ENCODE measurements at regions of chr15 and their contacts with region 1.

Region 1: DNA sequence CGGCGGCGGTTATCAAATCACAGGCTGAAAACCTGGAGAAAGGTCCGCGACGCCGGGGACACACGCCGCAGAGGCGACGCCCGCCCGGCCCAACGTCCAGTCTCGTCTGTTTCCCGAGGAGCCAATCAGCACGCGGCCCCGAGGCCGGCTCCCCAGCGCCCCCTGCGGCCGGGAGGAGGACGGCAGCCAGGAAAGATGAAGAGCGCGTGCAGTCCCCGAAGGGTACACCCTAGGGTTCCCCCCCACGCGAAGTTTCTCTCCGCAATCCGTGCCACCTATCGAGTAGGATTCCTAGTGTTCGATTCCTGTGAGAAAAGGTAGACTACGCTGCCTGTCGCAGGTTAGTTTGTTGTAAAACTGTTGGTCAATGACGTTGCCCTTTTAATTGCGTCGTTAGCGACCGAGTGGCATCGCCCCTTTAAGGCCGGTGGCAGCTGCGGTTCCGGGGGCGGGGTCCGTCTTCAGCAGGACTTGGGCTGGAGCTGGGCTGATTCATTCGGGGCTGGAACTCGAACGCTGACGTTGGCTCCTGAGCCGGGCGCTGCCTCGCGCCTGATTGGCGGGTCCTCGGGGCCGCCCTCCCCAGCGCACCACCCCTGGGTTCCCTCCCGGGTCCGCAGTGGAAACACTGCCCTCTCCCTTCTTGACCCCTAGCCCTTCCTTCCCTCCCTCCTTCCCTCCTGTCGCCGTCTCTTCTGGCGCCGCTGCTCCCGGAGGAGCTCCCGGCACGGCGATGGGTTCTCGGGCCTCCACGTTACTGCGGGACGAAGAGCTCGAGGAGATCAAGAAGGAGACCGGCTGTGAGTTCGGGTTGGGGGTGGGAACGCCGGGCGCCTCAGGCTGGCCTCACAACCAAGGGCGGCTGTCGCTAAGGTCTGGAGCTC is at the starts of genes CHP1 and EXD1:
- DNase-seq: peak; percentile 87
- ATAC-seq: peak; percentile 99
- H3K4me3 ChIP-seq: peak within 1 kb of the TSS; percentile 86
- H3K27ac ChIP-seq: peak within 1 kb of the TSS; percentile 89
- H3K4me1 ChIP-seq: peaks cover 2% of the 10 kb centered on the region; the same call in 1 of the 2 replicates
- H3K27me3 ChIP-seq: no peaks in the 10 kb centered on the region
- CTCF ChIP-seq: peak; percentile 80 to 95 (median 90)
- EP300 ChIP-seq: 0 out of 4 replicates have a peak, but pooled peaks have one; percentile 5 to 9
- POLR2A ChIP-seq: peak; percentile 94
- RAD21 ChIP-seq: peak; percentile 13; the same call in 1 of the 2 replicates
- polyA plus RNA-seq, gene CHP1: 32.5 to 43.3 TPM
- polyA plus RNA-seq, gene EXD1: 0.19 TPM in 1 of 2 experiments, not detected in the other

Region 2: GRCh38 chr15:41001524-41002214 is 229.2 kb before region 1 on chr15:
- CTCF ChIA-PET with region 1: no interaction called
- POLR2A ChIA-PET with region 1: no interaction called
- RAD21 ChIA-PET with region 1: no interaction called
- SMC1A ChIA-PET with region 1: no interaction called
- in situ Hi-C with region 1: no loop called
- intact Hi-C with region 1: no loop called
- DNase-seq: no peak
- ATAC-seq: no peak
- H3K4me3 ChIP-seq: no peak overlapping the region
- H3K27ac ChIP-seq: no peak overlapping the region
- H3K4me1 ChIP-seq: no peaks in the 10 kb centered on the region
- H3K27me3 ChIP-seq: no peaks in the 10 kb centered on the region
- CTCF ChIP-seq: no peak
- EP300 ChIP-seq: no peak
- POLR2A ChIP-seq: no peak
- RAD21 ChIP-seq: no peak

Region 3: DNA sequence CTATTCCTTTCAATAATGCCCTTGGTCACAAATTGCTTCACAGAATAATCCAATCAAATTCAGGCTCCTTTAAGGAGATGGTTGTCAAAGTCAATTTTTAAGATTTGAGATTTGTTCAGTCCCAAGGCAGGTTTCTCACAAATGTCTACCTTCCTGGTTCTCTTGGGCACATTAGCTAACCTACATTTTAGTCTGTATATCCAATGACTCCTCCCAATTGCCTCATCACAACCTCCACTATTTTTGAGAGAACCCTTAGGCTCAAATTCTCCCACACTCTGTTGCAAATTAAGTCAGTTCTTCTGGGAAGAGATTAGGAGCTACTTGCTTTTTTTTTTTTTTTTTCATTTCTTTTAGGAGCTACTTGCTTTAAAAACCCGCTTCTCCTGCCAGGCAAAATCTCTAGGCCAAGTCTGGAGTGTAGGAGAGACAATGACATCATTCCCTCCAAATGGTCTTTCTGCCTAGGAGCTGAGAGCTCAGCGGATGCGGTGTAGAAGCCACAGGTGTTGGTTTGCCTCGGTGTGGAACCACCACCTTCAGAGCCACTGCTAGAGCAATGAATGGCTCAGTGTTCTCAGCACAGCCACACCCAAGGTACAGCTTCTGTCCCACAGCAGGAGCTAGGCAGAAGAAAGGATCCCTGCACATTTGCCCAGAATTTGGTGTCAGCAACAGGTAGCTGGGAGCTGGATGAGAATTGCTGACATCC is 104.8 kb before region 1 on chr15:
- CTCF ChIA-PET with region 1: no interaction called
- POLR2A ChIA-PET with region 1: no interaction called
- RAD21 ChIA-PET with region 1: no interaction called
- SMC1A ChIA-PET with region 1: no interaction called
- in situ Hi-C with region 1: no loop called
- intact Hi-C with region 1: no loop called
- DNase-seq: no peak
- ATAC-seq: no peak
- H3K4me3 ChIP-seq: no peak overlapping the region
- H3K27ac ChIP-seq: no peak overlapping the region
- H3K4me1 ChIP-seq: no peaks in the 10 kb centered on the region
- H3K27me3 ChIP-seq: no peaks in the 10 kb centered on the region
- CTCF ChIP-seq: no peak
- EP300 ChIP-seq: no peak
- POLR2A ChIP-seq: no peak
- RAD21 ChIP-seq: no peak

Region 4: DNA sequence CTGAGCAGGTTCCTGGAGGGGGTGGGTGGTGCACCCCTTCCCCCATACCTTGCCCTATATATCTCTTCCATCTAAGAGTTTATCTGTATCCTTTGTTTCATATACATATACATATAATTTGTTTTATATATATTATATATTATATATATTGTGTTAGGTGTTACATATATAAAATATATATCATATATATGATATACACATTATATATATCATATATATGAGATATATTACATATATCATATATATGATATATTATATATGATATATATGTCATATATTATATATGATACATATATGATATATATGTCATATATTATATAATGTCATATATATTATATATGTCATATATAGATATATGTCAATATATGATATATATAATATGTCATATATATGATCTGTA is 31.4 kb before region 1 on chr15:
- CTCF ChIA-PET with region 1: no interaction called
- POLR2A ChIA-PET with region 1: no interaction called
- RAD21 ChIA-PET with region 1: no interaction called
- SMC1A ChIA-PET with region 1: no interaction called
- in situ Hi-C with region 1: no loop called
- intact Hi-C with region 1: no loop called
- DNase-seq: no peak
- ATAC-seq: no peak
- H3K4me3 ChIP-seq: no peak overlapping the region
- H3K27ac ChIP-seq: no peak overlapping the region
- H3K4me1 ChIP-seq: no peaks in the 10 kb centered on the region; the same call in 1 of the 2 replicates
- H3K27me3 ChIP-seq: no peaks in the 10 kb centered on the region
- CTCF ChIP-seq: no peak
- EP300 ChIP-seq: no peak
- POLR2A ChIP-seq: no peak
- RAD21 ChIP-seq: no peak

Region 5: DNA sequence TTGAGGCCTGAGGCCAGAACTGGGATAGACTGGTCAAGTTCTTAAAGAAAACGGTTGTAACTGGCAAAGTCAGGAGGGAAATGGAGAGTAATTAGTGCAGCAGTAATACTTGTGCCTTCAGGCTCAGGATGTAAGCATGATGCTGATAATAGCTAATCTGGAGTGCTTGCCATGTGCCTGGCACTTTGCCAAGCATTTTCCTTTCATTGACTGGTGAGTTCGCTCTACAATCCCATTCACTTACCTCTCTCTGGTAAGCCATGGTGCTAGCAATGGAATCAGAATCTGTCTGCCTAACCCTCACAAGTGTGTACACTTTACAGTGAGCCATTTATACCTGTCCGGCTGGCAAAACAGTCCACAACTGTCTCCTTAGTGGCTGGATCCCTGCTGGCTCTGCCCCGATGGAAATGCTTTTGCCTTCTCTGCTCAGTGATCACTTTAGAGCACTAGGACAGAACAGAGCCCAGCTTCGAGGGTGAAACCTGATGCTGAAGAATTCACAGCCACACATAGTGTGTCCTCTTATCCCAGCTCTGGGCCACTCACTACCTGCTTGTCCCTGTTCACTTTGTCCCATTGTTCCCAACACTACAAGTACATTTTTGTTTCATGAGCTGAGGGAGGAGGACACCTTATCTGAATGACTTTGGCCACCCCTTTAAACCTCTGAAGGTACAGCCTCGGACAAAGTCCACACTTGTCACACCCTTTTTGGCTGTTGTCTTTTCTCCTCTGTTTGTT is 10.5 kb after region 1 on chr15:
- CTCF ChIA-PET with region 1: interaction called, 17 read pairs
- POLR2A ChIA-PET with region 1: interaction called, 4 read pairs
- RAD21 ChIA-PET with region 1: no interaction called
- SMC1A ChIA-PET with region 1: no interaction called
- in situ Hi-C with region 1: no loop called
- intact Hi-C with region 1: no loop called
- DNase-seq: no peak
- ATAC-seq: no peak
- H3K4me3 ChIP-seq: no peak overlapping the region
- H3K27ac ChIP-seq: no peak overlapping the region
- H3K4me1 ChIP-seq: no peaks in the 10 kb centered on the region
- H3K27me3 ChIP-seq: no peaks in the 10 kb centered on the region
- CTCF ChIP-seq: no peak
- EP300 ChIP-seq: no peak
- POLR2A ChIP-seq: no peak
- RAD21 ChIP-seq: no peak

Region 6: DNA sequence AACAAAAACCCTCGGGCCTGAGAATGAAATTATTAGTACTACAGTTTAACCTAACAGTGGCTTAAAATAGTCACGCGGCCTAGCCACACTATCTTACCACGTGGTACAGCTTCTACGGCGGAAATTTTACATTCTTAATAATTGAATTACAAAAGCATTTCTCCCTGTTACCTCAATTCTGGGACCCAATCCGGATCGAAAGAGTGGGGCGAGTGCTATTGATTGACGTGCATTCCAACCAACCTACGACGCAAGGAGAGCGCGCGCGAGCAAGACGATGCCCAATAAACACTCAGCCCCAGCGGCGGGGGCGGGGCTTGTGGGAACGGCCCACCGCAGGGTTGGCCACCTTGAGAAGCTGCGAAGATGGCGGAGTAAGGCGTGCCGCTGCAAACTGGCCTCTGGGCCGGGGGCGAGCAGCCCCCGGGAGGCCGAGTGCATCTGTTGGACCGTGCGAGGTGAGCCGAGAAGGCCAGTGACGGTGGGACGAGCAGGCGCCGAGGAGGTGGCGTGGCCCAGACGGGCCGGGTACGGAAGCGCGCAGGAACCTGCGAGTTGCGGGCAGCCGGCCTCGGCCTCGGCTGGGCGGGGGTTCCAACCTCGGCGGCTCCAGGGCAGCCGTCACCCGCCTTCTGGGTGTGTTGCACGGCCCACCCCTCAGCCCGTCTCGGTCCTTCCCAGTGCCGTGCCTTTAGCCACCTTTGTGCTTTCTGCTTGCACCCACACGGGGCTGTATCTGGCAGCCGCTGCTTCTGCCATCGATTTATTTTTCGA is 52.9 kb after region 1 on chr15:
- CTCF ChIA-PET with region 1: interaction called, 10 read pairs
- POLR2A ChIA-PET with region 1: interaction called, 3 read pairs
- RAD21 ChIA-PET with region 1: interaction called, 3 read pairs
- SMC1A ChIA-PET with region 1: interaction called, 3 read pairs
- in situ Hi-C with region 1: no loop called
- intact Hi-C with region 1: loop called (anchors 5 kb)
- DNase-seq: peak; percentile 99
- ATAC-seq: peak; percentile 98
- H3K4me3 ChIP-seq: peak overlapping the region; percentile 76
- H3K27ac ChIP-seq: peak overlapping the region; percentile 95
- H3K4me1 ChIP-seq: peaks cover 6% of the 10 kb centered on the region
- H3K27me3 ChIP-seq: no peaks in the 10 kb centered on the region
- CTCF ChIP-seq: no peak
- EP300 ChIP-seq: 0 out of 4 replicates have a peak, but pooled peaks of 1 of the 2 experiments have one; percentile 12
- POLR2A ChIP-seq: peak; percentile 95
- RAD21 ChIP-seq: no peak

Region 7: DNA sequence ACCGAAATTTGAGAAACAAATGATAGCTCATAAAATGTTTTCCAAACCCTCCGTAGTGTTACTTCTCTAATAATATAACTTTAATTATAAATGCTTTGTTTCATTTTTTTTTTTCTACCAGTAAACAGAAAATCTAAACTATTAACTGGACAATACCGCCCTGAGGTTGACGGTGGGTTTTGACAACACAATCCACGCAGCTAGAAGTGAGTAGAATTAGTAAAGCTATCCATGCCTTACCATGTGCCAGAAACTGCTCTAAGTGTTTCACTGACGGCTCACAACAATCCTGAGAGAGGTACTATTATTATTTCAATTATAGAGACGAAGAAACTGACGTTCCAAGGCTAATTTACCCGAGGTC is 171.0 kb after region 1 on chr15:
- CTCF ChIA-PET with region 1: no interaction called
- POLR2A ChIA-PET with region 1: no interaction called
- RAD21 ChIA-PET with region 1: no interaction called
- SMC1A ChIA-PET with region 1: no interaction called
- in situ Hi-C with region 1: no loop called
- intact Hi-C with region 1: loop called (anchors 1 kb)
- DNase-seq: no peak
- ATAC-seq: no peak
- H3K4me3 ChIP-seq: peak overlapping the region; percentile 91
- H3K27ac ChIP-seq: peak overlapping the region; percentile 67
- H3K4me1 ChIP-seq: peaks cover 3% of the 10 kb centered on the region
- H3K27me3 ChIP-seq: no peaks in the 10 kb centered on the region
- CTCF ChIP-seq: no peak
- EP300 ChIP-seq: no peak
- POLR2A ChIP-seq: no peak
- RAD21 ChIP-seq: no peak

Region 8: GRCh38 chr15:42375941-42376340 is 1145.0 kb after region 1 on chr15:
- CTCF ChIA-PET with region 1: no interaction called
- POLR2A ChIA-PET with region 1: no interaction called
- RAD21 ChIA-PET with region 1: no interaction called
- SMC1A ChIA-PET with region 1: no interaction called
- in situ Hi-C with region 1: no loop called
- intact Hi-C with region 1: no loop called
- DNase-seq: no peak
- ATAC-seq: no peak
- H3K4me3 ChIP-seq: no peak overlapping the region
- H3K27ac ChIP-seq: no peak overlapping the region
- H3K4me1 ChIP-seq: no peaks in the 10 kb centered on the region
- H3K27me3 ChIP-seq: no peaks in the 10 kb centered on the region
- CTCF ChIP-seq: no peak
- EP300 ChIP-seq: no peak
- POLR2A ChIP-seq: no peak
- RAD21 ChIP-seq: no peak